Naive thymus-derived CD4-positive, alpha-beta T cell (primary cell): ENCODE measurements at regions of chr1 and their contacts with region 1.

Region 1: GRCh38 chr1:6784560-6785317 is 515 bp upstream of the CAMTA1 start:
- DNase-seq: peak; percentile 94 to 100 (median 100)
- ATAC-seq: peak; percentile 90
- H3K4me3 ChIP-seq: peak overlapping the region; percentile 79
- H3K4me3 Mint-ChIP-seq: peak overlapping the region; percentile 85 to 96 (median 90)
- H3K27ac ChIP-seq: peak overlapping the region; percentile 94
- H3K27ac Mint-ChIP-seq: peak overlapping the region; percentile 80 to 96 (median 93)
- H3K4me1 ChIP-seq: peaks cover 25 to 26% of the 10 kb centered on the region in 2 donors
- H3K4me1 Mint-ChIP-seq: peaks cover 29 to 45% (median 44%) of the 10 kb centered on the region in 7 donors
- H3K27me3 ChIP-seq: no peaks in the 10 kb centered on the region
- H3K27me3 Mint-ChIP-seq: peaks cover 0 to 3% (median 0%) of the 10 kb centered on the region in 5 donors

Region 2: DNA sequence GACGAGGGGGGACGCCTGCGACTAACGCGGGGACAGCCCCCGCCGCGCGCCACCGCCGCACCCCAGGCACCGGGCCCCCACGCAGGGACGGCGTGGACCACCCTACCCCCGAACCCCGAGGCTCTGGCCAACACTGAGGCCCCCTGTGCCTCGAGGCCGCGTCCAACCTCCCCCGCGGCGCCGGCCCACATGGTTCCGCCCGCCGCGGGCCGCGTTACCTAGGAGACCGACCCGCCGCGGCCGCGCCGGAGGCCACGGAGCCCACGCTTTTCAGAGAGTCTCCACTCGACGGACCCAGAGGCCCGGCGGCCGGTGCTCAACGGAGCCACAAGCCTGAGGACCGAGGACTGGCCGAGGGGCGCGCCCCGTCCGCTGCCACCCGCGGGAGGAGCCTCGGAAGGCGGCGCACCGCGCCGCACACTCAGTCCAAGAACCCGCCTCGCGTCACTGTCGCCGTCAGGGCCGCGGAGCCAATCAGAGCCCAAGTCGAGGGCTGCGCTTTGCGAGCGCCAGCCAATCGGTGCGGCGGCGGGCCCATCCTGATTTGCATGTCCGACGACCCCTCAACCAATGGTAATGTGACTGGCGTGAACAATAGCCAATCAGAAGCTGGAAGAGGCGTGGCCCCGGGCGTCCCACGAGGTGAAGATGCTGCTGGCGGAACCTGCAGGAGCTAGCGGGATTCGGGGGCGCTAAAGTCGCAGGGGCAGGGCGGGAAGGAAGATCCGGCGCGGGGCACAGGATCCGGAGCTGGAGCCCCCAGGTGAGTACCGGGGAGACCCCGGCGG is 792.5 kb before region 1 on chr1 and contains the start of gene NPHP4:
- CTCF ChIA-PET with region 1: no interaction called
- POLR2A ChIA-PET with region 1: no interaction called
- intact Hi-C with region 1: loop called in 1 of 2 experiments (anchors 2 kb)
- DNase-seq: peak; percentile 95 to 99 (median 99)
- ATAC-seq: peak; percentile 93
- H3K4me3 ChIP-seq: peak within 1 kb of the TSS; percentile 88
- H3K4me3 Mint-ChIP-seq: peak within 1 kb of the TSS; percentile 88 to 100 (median 96)
- H3K27ac ChIP-seq: peak within 1 kb of the TSS; percentile 94
- H3K27ac Mint-ChIP-seq: peak within 1 kb of the TSS; percentile 88 to 97 (median 96)
- H3K4me1 ChIP-seq: peaks cover 23 to 32% of the 10 kb centered on the region in 2 donors
- H3K4me1 Mint-ChIP-seq: peaks cover 23 to 49% (median 40%) of the 10 kb centered on the region in 7 donors
- H3K27me3 ChIP-seq: no peaks in the 10 kb centered on the region
- H3K27me3 Mint-ChIP-seq: peaks cover 0 to 2% (median 0%) of the 10 kb centered on the region in 5 donors
- total RNA-seq, gene NPHP4: 9.0 to 20.6 (median 11.1) TPM

Region 3: DNA sequence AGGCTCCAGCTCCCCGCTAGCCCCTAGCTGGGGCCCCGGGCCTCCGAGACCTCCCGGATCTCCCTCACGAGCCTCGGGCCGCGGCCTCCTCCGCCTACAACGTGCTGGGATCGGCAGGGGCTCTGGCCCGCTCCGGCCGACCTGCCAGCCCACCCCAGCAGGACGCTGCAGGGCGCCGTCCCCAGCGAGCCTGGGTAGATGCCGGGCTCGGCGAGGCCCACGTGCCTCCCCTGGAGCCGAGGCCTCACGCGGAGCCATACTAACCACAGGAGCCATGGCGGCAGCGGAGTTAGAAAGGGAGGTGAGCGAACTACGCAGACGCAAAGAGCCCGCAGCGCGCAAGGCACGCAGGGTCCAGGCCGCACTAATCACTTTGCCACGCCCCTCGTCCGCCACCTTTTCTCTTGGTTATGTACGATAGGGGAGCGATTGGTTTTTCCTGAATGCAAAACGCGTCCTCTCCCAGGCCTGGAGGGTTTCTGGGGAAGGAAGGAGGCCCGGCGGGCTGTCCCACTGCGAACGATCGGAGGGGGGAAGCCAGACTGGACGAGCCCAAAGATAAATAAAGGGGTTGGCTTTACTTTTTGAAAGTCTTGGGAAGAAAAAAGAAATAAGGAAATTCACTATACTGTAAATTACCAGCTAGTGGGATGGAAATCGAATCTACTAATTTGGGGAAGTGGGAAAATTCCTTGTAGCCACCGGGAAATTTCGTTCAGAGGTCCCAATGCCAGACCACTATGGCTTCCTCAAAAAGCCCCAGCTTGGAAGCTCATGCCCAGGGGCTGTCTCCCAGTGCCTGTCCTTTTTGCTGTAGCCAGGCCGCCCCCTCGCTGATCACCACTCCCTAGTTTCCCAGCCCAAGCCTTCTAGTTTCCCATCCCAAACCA is 585.2 kb before region 1 on chr1 and contains the start of gene RPL22:
- CTCF ChIA-PET with region 1: no interaction called
- POLR2A ChIA-PET with region 1: no interaction called
- intact Hi-C with region 1: loop called in 1 of 2 experiments (anchors 2 kb)
- DNase-seq: peak; percentile 79 to 98 (median 96)
- ATAC-seq: peak; percentile 99
- H3K4me3 ChIP-seq: peak within 1 kb of the TSS; percentile 79
- H3K4me3 Mint-ChIP-seq: peak within 1 kb of the TSS; percentile 85 to 98 (median 94)
- H3K27ac ChIP-seq: peak within 1 kb of the TSS; percentile 85
- H3K27ac Mint-ChIP-seq: peak within 1 kb of the TSS; percentile 82 to 96 (median 93)
- H3K4me1 ChIP-seq: peaks cover 24 to 25% of the 10 kb centered on the region in 2 donors
- H3K4me1 Mint-ChIP-seq: peaks cover 40 to 56% (median 47%) of the 10 kb centered on the region in 7 donors
- H3K27me3 ChIP-seq: no peaks in the 10 kb centered on the region
- H3K27me3 Mint-ChIP-seq: peaks cover 0 to under 1% (median 0%) of the 10 kb centered on the region in 5 donors
- total RNA-seq, gene RPL22: 431 to 720 (median 579) TPM

Region 4: GRCh38 chr1:6464514-6464836 is 320.3 kb before region 1 on chr1:
- CTCF ChIA-PET with region 1: no interaction called
- POLR2A ChIA-PET with region 1: interaction called, 5 read pairs
- intact Hi-C with region 1: loop called in 1 of 2 experiments (anchors 10 kb)
- DNase-seq: no peak
- ATAC-seq: no peak
- H3K4me3 ChIP-seq: peak overlapping the region; percentile 89
- H3K4me3 Mint-ChIP-seq: peak overlapping the region; percentile 89 to 98 (median 92)
- H3K27ac ChIP-seq: peak overlapping the region; percentile 94
- H3K27ac Mint-ChIP-seq: peak overlapping the region; percentile 90 to 99 (median 95)
- H3K4me1 ChIP-seq: peaks cover 31 to 53% of the 10 kb centered on the region in 2 donors
- H3K4me1 Mint-ChIP-seq: peaks cover 23 to 55% (median 49%) of the 10 kb centered on the region in 7 donors
- H3K27me3 ChIP-seq: no peaks in the 10 kb centered on the region
- H3K27me3 Mint-ChIP-seq: peaks cover 0 to 3% (median 0%) of the 10 kb centered on the region in 5 donors

Region 5: GRCh38 chr1:6554031-6554906 is 230.5 kb before region 1 on chr1 and contains the start of gene NOL9:
- CTCF ChIA-PET with region 1: no interaction called
- POLR2A ChIA-PET with region 1: no interaction called
- intact Hi-C with region 1: loop called (anchors 10 kb)
- DNase-seq: peak; percentile 90 to 97 (median 93)
- ATAC-seq: peak; percentile 100
- H3K4me3 ChIP-seq: peak within 1 kb of the TSS; percentile 79
- H3K4me3 Mint-ChIP-seq: peak within 1 kb of the TSS; percentile 77 to 85 (median 80)
- H3K27ac ChIP-seq: peak within 1 kb of the TSS; percentile 83
- H3K27ac Mint-ChIP-seq: peak within 1 kb of the TSS in 8 of 9 donors; percentile 60 to 85 (median 75)
- H3K4me1 ChIP-seq: peaks cover 8 to 20% of the 10 kb centered on the region in 2 donors
- H3K4me1 Mint-ChIP-seq: peaks cover 0 to 25% (median 17%) of the 10 kb centered on the region in 7 donors
- H3K27me3 ChIP-seq: no peaks in the 10 kb centered on the region
- H3K27me3 Mint-ChIP-seq: no peaks in the 10 kb centered on the region
- total RNA-seq, gene NOL9: 54.2 to 80.6 (median 73.8) TPM

Region 6: GRCh38 chr1:6701437-6702153 is 83.1 kb before region 1 on chr1 and contains the start of gene DNAJC11:
- CTCF ChIA-PET with region 1: no interaction called
- POLR2A ChIA-PET with region 1: interaction called, 3 read pairs
- intact Hi-C with region 1: loop called (anchors 1 to 2 kb)
- DNase-seq: peak; percentile 84 to 99 (median 93)
- ATAC-seq: peak; percentile 99
- H3K4me3 ChIP-seq: peak within 1 kb of the TSS; percentile 90
- H3K4me3 Mint-ChIP-seq: peak within 1 kb of the TSS; percentile 87 to 96 (median 93)
- H3K27ac ChIP-seq: peak within 1 kb of the TSS; percentile 92
- H3K27ac Mint-ChIP-seq: peak within 1 kb of the TSS; percentile 77 to 95 (median 92)
- H3K4me1 ChIP-seq: peaks cover 8 to 9% of the 10 kb centered on the region in 2 donors
- H3K4me1 Mint-ChIP-seq: peaks cover 7 to 40% (median 32%) of the 10 kb centered on the region in 7 donors
- H3K27me3 ChIP-seq: no peaks in the 10 kb centered on the region
- H3K27me3 Mint-ChIP-seq: no peaks in the 10 kb centered on the region
- total RNA-seq, gene DNAJC11: 37.2 to 49.7 (median 44.0) TPM

Region 7: DNA sequence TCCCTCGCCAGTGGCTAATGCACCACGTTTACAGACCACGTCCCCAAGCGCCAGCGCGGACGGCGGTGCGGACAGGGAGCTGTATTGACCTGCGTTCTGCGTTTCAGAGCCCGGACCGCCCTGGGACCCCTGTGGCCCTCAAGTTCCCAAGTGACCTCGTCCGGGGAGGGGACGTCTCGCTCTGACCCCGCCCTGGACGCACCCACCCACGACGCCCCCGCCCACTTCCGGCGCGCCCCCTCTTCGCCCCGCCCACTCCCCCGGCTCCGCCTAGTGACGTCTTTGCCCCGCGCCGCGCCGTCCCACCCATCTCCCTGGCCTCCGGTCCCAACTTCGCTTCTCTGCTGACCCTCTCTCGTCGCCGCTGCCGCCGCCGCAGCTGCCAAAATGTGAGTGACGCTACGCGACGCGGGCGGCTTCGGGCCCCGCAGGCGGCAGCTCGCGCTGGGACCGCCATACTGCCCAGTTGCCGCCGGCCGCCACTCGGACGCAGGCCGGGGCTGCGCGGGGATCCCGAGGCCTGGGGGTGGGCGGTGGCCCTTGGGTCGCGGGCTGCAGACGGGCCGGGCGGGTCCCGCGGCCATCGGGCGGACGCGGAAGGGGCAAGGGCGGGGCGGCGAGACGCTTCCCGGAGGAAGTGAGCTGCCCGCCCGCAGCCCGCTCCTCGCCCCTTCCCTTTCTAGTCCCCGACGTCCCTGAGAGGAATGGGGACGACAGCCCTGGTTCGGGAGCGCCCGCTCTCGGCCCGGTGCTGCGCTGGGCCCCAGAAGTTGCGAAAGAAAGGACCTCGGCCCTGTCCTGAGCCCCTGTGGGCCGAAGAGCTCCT is 986.5 kb after region 1 on chr1 and contains the start of gene VAMP3:
- CTCF ChIA-PET with region 1: no interaction called
- POLR2A ChIA-PET with region 1: no interaction called
- intact Hi-C with region 1: loop called in 1 of 2 experiments (anchors 5 kb)
- DNase-seq: peak; percentile 58 to 92 (median 77)
- ATAC-seq: peak; percentile 98
- H3K4me3 ChIP-seq: peak within 1 kb of the TSS; percentile 83
- H3K4me3 Mint-ChIP-seq: peak within 1 kb of the TSS; percentile 82 to 93 (median 89)
- H3K27ac ChIP-seq: peak within 1 kb of the TSS; percentile 90
- H3K27ac Mint-ChIP-seq: peak within 1 kb of the TSS; percentile 67 to 94 (median 86)
- H3K4me1 ChIP-seq: peaks cover 9 to 13% of the 10 kb centered on the region in 2 donors
- H3K4me1 Mint-ChIP-seq: peaks cover 22 to 52% (median 41%) of the 10 kb centered on the region in 7 donors
- H3K27me3 ChIP-seq: no peaks in the 10 kb centered on the region
- H3K27me3 Mint-ChIP-seq: peaks cover 5 to 33% (median 6%) of the 10 kb centered on the region in 5 donors
- total RNA-seq, gene VAMP3: 38.7 to 87.1 (median 60.9) TPM